GM23248 (cell line): ENCODE measurements at regions of chr10 and their contacts with region 1.

Region 1: DNA sequence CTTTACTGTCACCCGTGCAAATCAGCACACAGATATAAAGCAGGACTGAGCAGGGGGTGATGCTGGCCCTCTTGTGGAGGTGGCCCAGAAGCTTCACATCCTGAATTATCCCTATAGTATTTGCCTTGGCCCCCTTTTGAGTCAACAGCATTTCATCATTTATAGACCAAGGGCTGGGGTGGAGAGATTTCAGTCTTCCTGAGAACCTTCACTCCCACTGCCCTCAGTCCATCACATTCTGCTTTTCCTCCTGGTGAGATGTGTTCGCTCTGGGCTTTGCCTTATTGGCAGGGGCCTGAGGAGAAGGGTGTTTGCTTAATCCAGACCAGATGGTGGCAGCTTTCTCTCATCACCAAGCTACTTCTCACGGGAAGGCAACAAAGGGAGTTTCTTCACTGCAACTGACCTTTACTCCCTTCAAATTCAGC is 47.7 kb downstream of the NOC3L start:
- DNase-seq: peak; percentile 59
- H3K4me3 ChIP-seq: no peak overlapping the region
- H3K27ac ChIP-seq: 0 out of 2 replicates have a peak overlapping the region, but pooled peaks have one; percentile 48
- H3K4me1 ChIP-seq: peaks cover 19% of the 10 kb centered on the region
- H3K27me3 ChIP-seq: no peaks in the 10 kb centered on the region

Region 2: GRCh38 chr10:93790439-93790838 is 524.6 kb before region 1 on chr10:
- in situ Hi-C with region 1: no loop called
- DNase-seq: no peak
- H3K4me3 ChIP-seq: no peak overlapping the region
- H3K27ac ChIP-seq: no peak overlapping the region
- H3K4me1 ChIP-seq: no peaks in the 10 kb centered on the region
- H3K27me3 ChIP-seq: peaks cover 19% of the 10 kb centered on the region; the same call in 1 of the 2 replicates

Region 3: GRCh38 chr10:93821051-93821772 is 493.8 kb before region 1 on chr10:
- in situ Hi-C with region 1: loop called (anchors 10 kb)
- DNase-seq: peak; percentile 61
- H3K4me3 ChIP-seq: no peak overlapping the region
- H3K27ac ChIP-seq: no peak overlapping the region
- H3K4me1 ChIP-seq: no peaks in the 10 kb centered on the region
- H3K27me3 ChIP-seq: peaks cover 5% of the 10 kb centered on the region

Region 4: DNA sequence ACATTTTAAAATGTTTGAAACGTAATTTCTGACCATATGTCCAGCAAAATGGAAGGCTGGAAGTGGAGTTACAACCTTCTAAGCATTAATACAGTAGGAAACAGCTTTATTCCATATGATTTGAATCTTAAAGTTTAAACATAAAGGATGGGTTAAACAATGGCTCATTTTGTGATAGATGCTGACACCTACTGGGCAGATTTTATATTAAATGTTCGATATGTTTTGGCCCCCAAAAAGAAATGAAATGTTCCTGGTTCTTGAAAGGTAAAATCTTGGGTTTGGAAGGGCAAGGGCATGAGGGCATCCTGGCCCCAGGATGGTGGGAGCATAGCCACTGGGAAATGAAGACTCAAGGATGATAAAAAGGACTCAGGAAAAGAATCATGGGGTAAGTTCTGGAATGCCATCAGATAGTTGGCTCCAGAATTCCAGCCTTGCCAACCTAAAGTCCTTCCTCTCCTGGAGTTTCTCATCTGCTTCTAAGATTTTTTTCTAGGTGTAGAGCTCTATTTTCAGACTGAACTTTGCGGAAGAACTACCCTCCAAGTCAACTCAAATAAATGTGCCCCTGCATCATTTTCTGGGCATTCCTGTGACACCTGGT is 455.9 kb before region 1 on chr10:
- in situ Hi-C with region 1: no loop called
- DNase-seq: peak; percentile 28
- H3K4me3 ChIP-seq: no peak overlapping the region
- H3K27ac ChIP-seq: no peak overlapping the region
- H3K4me1 ChIP-seq: no peaks in the 10 kb centered on the region
- H3K27me3 ChIP-seq: peaks cover 6% of the 10 kb centered on the region

Region 5: DNA sequence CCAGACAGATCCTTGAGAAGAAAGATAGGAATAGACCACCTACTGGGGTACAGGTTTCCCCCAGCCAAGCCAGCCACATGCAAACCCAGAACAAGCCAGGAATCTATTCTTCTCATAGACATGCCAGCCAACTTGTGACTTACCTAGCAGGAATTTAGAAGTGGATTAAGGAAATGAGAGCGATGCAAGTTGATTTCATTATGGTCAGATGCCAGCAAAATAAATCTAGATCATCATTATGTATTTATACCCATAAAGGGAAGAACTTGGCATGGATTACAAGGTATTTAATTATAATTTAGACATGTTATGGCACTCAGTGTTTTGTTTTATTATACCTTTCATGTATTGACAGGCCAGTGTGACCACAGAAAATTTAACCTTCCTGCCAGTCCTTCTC is 388.4 kb before region 1 on chr10:
- in situ Hi-C with region 1: no loop called
- DNase-seq: peak; percentile 24
- H3K4me3 ChIP-seq: no peak overlapping the region
- H3K27ac ChIP-seq: no peak overlapping the region
- H3K4me1 ChIP-seq: no peaks in the 10 kb centered on the region
- H3K27me3 ChIP-seq: no peaks in the 10 kb centered on the region

Region 6: DNA sequence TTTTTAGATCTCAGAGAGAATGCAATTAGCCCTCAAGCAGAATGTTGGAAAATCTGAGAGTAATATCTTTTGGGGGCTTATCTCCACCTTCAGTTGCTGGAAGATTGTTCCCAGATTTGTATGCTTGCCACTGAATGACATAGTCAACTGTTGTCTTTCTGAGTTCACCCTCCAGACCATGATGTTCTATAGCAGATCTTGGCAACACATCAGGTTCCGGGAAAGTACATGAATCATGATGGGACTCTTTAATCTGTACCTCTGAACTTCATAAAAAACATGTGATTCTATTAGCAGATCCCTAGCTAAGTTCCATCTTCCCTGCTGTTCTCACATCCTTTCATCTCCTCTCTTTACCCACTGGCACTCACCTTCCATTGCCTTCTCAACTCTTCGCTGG is 252.4 kb before region 1 on chr10:
- in situ Hi-C with region 1: no loop called
- DNase-seq: peak; percentile 30
- H3K4me3 ChIP-seq: no peak overlapping the region
- H3K27ac ChIP-seq: no peak overlapping the region
- H3K4me1 ChIP-seq: peaks cover 16% of the 10 kb centered on the region
- H3K27me3 ChIP-seq: no peaks in the 10 kb centered on the region

Region 7: GRCh38 chr10:94088926-94089381 is 226.1 kb before region 1 on chr10:
- in situ Hi-C with region 1: loop called (anchors 10 kb)
- DNase-seq: peak; percentile 46
- H3K4me3 ChIP-seq: 0 out of 2 replicates have a peak overlapping the region, but pooled peaks have one; percentile 4
- H3K27ac ChIP-seq: no peak overlapping the region
- H3K4me1 ChIP-seq: peaks cover 17% of the 10 kb centered on the region
- H3K27me3 ChIP-seq: no peaks in the 10 kb centered on the region